Activated T-helper 2 cell treated with anti-CD3 and anti-CD28 coated beads, Interferon-gamma antibody, Interleukin-2, Interleukin-4, amounts not matched to agents 10 μg/mL and 5 μg/mL and 100 μg/mL, durations not matched to agents 14 hours and 24 hours and 36 hours (primary cell): ENCODE measurements at regions of chr12 and their contacts with region 1.

Region 1: DNA sequence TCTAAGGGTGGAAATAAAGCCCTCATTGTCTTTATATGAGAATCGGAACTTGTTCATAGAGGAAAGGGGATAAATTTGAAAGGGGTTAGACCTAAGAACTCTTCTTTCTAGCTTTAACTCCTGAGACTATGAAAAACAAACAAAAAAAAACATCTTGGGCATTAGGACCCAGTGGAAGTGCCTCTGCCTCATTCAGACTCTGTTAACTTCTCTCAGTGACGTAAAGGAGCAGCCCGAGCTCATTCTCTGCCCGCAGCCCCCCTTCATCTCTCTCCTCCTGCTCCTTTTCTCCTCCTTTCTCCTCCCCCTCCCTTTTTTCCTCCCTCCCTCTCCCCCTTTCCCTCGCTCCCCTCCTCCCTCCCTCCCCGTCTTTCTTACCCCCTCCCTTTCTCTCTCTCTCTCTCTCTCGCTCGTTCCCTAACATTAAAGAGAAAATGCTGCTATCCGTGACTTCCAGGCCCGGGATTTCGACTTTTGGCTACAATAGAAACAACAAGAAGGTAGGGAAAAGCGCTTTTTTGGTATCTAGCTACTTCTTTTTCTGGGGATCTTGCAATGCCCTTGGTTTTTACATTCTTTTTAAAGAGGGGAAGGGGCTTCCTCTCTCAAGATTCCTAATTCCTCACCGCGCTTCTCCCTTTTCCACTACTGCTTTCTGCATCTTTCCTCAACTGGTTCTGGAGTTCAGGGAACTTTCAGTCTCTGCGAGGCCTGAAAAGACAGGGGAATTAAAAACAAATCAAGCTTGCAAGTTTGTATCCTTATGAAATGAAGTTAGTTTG is at the start of gene RBMS2:
- DNase-seq: peak; percentile 23
- H3K4me3 Mint-ChIP-seq: peak within 1 kb of the TSS; percentile 81
- H3K27ac Mint-ChIP-seq: peak within 1 kb of the TSS; percentile 83
- H3K4me1 Mint-ChIP-seq: peaks cover 28% of the 10 kb centered on the region
- H3K27me3 Mint-ChIP-seq: no peaks in the 10 kb centered on the region
- total RNA-seq, gene RBMS2: 7.9 and 11.0 TPM in 2 replicates

Region 2: GRCh38 chr12:56593909-56594621 is 72.3 kb after region 1 on chr12:
- intact Hi-C with region 1: no loop called
- DNase-seq: peak; percentile 53
- H3K4me3 Mint-ChIP-seq: no peak overlapping the region
- H3K27ac Mint-ChIP-seq: no peak overlapping the region
- H3K4me1 Mint-ChIP-seq: peaks cover 6% of the 10 kb centered on the region
- H3K27me3 Mint-ChIP-seq: no peaks in the 10 kb centered on the region

Region 3: GRCh38 chr12:57078519-57079404 is 557.0 kb after region 1 on chr12 and contains the start of gene NEMP1:
- intact Hi-C with region 1: loop called (anchors 2 kb)
- DNase-seq: peak; percentile 97
- H3K4me3 Mint-ChIP-seq: peak within 1 kb of the TSS; percentile 100
- H3K27ac Mint-ChIP-seq: peak within 1 kb of the TSS; percentile 98
- H3K4me1 Mint-ChIP-seq: peaks cover 27% of the 10 kb centered on the region
- H3K27me3 Mint-ChIP-seq: no peaks in the 10 kb centered on the region
- total RNA-seq, gene NEMP1: 79.8 and 86.7 TPM in 2 replicates